ENCODE measurements at regions of chr9 and their contacts with region 1.

Region 1: GRCh38 chr9:99819856-99820684 is 1.6 kb upstream of the NR4A3 start:
- DNase-seq: peak in 1 of 2 donors; percentile 96
- H3K4me3 ChIP-seq: peak overlapping the region; percentile 81 to 92
- H3K27ac ChIP-seq: peak overlapping the region; percentile 99
- H3K4me1 ChIP-seq: peaks cover 41% of the 10 kb centered on the region
- H3K27me3 ChIP-seq: no peaks in the 10 kb centered on the region
- CTCF ChIP-seq: no peak
- POLR2A ChIP-seq: peak in 1 of 2 donors; percentile 62

Region 2: GRCh38 chr9:99221621-99222415 is 598.3 kb before region 1 on chr9 and contains the starts of genes ALG2 and SEC61B:
- intact Hi-C with region 1: loop called (anchors 10 kb)
- DNase-seq: peak in 1 of 2 donors; percentile 96
- H3K4me3 ChIP-seq: peak within 1 kb of the TSS; percentile 82 to 85
- H3K27ac ChIP-seq: peak within 1 kb of the TSS; percentile 93
- H3K4me1 ChIP-seq: peaks cover 75% of the 10 kb centered on the region
- H3K27me3 ChIP-seq: no peaks in the 10 kb centered on the region
- CTCF ChIP-seq: no peak
- POLR2A ChIP-seq: peak in 1 of 2 donors; percentile 71
- total RNA-seq, gene ALG2: 30.0 TPM
- total RNA-seq, gene SEC61B: 80.8 TPM

Region 3: DNA sequence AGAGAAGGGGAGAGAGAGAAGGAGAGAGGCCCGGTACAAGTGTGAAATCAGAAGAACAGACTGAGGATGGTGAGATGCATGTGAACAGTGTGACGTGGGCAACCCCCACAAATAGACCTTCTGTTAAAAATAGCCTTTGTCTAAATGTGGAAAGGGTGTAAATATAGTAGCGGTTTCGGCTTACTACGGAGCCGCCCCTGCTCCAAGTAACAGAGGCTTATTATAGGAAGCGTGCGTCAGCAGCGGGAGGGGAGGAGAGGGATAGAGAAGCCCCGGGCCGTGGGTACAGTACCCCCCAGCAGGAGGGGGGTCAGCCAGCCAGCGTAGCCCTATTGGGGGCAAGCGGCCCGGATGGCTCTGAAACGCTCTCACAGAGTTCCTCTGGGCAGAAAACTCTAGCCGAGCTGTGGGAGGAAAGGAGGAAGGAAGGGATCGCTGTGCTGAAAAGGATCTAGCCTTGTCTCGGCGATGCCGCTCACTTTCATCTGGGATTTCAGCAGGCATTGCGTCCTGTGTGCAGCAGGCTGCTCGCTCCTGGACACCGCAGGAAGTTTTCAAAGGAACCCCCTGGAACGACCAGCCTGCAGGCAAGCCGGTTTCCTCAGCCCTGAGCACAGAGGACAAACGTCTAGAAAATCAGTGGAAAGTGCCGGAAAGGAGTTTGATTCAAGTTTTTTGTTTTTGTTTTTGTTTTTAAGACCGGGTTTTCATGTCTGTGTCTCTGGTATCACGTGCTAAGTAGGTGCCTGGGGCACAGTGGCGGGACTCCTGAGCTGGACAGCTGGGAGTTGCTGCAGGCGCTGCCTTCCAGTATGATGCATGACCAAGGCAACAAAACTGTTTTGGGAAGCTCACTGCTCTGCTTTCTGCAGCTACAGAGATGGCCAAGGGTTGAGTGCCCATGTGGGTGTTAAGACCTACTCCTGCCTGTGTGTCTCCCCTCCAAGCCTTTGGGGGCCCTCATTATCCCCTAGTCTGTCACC is 451.4 kb before region 1 on chr9:
- intact Hi-C with region 1: loop called (anchors 10 kb)
- DNase-seq: no peak
- H3K4me3 ChIP-seq: peak overlapping the region; percentile 42 to 46
- H3K27ac ChIP-seq: peak overlapping the region; percentile 95
- H3K4me1 ChIP-seq: peaks cover 17% of the 10 kb centered on the region
- H3K27me3 ChIP-seq: no peaks in the 10 kb centered on the region
- CTCF ChIP-seq: no peak
- POLR2A ChIP-seq: no peak

Region 4: GRCh38 chr9:99906403-99907207 is 86.5 kb after region 1 on chr9 and contains the start of gene STX17:
- intact Hi-C with region 1: loop called (anchors 2 kb)
- DNase-seq: no peak
- H3K4me3 ChIP-seq: peak within 1 kb of the TSS; percentile 71 to 90
- H3K27ac ChIP-seq: peak within 1 kb of the TSS; percentile 97
- H3K4me1 ChIP-seq: peaks cover 37% of the 10 kb centered on the region
- H3K27me3 ChIP-seq: no peaks in the 10 kb centered on the region
- CTCF ChIP-seq: no peak
- POLR2A ChIP-seq: peak in 1 of 2 donors; percentile 87
- total RNA-seq, gene STX17: 55.7 TPM

Region 5: DNA sequence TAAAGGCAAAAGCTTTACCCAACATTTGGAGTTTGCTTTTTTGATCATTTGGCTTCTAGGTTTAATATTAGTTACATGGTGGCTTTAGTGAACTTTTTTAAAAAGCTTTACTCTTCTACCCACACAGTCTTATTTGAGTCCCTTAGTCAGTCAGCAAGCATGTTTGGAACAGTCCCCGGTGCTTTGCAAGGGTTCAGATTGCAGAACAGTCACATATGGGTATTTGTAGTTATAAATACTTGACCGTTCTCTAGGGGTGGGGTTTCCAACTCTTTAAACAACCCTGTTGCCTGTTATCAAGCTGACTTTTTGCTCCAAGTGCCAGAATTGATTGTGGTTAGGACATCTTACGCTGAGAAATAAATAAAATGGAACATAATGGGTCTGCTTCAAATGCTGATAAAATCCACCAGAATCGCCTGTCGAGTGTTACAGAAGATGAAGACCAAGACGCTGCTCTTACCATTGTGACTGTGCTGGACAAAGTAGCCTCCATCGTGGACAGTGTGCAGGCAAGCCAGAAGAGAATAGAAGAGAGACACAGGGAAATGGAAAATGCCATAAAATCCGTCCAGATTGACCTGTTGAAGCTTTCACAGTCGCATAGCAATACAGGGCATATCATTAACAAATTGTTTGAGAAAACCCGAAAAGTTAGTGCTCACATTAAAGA is 757.8 kb after region 1 on chr9 and contains the start of gene CAVIN4:
- intact Hi-C with region 1: no loop called
- DNase-seq: no peak
- H3K4me3 ChIP-seq: no peak within 1 kb of the TSS
- H3K27ac ChIP-seq: no peak within 1 kb of the TSS
- H3K4me1 ChIP-seq: no peaks in the 10 kb centered on the region
- H3K27me3 ChIP-seq: no peaks in the 10 kb centered on the region
- CTCF ChIP-seq: no peak
- POLR2A ChIP-seq: no peak
- total RNA-seq, gene CAVIN4: 0.49 TPM

Measured in vagina (tissue), 2 donors.